T-cell (primary cell): ENCODE measurements at regions of chr11 and their contacts with region 1.

Region 1: DNA sequence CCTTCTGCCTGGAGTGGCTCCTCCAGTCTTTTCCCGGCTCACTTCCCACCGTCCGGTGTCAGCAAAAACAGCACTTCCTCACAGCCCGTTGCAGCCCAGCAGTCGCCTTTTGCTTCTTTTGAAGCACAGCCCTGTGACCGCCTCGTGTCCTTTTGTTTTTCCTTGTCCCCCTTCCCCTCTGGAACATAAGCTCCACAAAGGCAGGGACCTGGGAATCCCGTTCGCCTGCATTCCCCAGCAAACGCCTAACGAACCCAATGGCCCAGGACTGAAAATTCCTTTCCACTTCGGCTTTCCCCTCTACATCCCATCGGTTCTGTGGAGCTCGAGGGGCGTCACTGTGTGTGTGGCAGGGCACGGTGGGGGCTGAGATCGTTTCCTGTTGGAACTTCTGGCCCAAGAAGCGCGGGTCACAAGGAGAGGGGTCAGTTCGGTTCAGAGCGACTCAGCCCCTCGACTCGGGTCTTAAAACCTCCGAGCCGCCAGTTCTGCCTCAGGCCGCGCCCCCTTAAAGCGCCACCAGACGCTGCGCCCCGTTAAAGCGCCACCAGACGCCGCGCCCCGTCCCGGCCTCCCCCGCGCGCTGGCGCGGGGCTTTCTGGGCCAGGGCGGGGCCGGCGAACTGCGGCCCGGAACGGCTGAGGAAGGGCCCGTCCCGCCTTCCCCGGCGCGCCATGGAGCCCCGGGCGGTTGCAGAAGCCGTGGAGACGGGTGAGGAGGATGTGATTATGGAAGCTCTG is 843 bp downstream of the RIC8A start:
- DNase-seq: peak; percentile 67 to 89 (median 80)
- ATAC-seq: peak; percentile 65 to 72 (median 67)
- H3K4me3 ChIP-seq: peak overlapping the region; percentile 97 to 99
- H3K4me3 Mint-ChIP-seq: peak overlapping the region; percentile 85 to 99 (median 96)
- H3K27ac ChIP-seq: peak overlapping the region; percentile 99
- H3K27ac Mint-ChIP-seq: peak overlapping the region; percentile 98 to 99
- H3K4me1 ChIP-seq: peaks cover 15 to 69% of the 10 kb centered on the region in 2 experiments
- H3K4me1 Mint-ChIP-seq: peaks cover 38 to 59% (median 53%) of the 10 kb centered on the region in 3 donors
- H3K27me3 ChIP-seq: no peaks in the 10 kb centered on the region
- H3K27me3 Mint-ChIP-seq: no peaks in the 10 kb centered on the region

Region 2: DNA sequence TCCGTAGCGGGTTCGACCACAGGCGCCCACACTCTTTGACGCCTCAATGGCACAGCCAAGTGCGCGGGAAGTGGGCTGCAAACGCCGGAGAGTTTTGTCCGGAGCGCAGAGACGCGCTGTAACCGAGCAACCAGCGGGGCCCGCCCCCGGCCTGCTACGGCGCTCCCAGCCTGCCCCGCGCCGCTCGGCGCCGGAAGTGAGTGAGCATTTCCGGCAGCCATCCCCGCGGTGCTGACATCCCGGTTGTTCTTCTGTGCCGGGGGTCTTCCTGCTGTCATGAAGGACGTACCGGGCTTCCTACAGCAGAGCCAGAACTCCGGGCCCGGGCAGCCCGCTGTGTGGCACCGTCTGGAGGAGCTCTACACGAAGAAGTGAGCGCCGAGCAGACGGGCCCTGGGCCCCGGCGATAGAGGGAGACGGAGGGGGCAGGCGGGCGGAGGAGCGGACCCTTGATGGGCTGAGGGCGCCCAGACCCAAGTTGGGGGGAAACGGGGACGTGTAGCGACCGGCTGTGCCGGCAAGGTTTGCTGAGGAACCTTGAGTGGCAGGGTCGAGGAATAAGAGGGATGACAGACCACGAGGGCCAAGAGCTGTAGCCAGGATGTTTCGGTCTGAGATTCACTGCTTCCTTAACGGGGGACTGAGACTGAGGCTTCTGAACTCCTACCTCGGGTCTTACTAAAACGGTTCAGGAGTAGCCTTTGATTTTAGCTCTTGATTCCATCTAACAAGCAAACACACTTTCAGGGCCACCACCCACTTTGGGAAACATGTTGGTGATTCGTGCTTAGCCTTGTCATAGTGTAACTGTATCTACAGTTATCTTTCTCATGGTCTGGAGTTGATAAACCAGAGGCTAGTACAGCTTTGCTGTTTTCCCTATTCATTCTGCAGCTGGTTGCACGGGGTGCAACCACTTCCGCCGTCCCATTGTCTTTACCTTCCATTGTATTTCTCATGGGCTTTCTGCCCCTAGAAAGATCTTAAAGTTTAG is 28.7 kb after region 1 on chr11 and contains the start of gene PSMD13:
- CTCF ChIA-PET with region 1: interaction called in 1 of 2 experiments, 3 read pairs
- POLR2A ChIA-PET with region 1: interaction called in 1 of 2 experiments, 13 read pairs
- DNase-seq: peak; percentile 73 to 92 (median 85)
- ATAC-seq: peak; percentile 70 to 85 (median 83)
- H3K4me3 ChIP-seq: peak within 1 kb of the TSS; percentile 96 to 100
- H3K4me3 Mint-ChIP-seq: peak within 1 kb of the TSS; percentile 94 to 98 (median 96)
- H3K27ac ChIP-seq: peak within 1 kb of the TSS; percentile 99
- H3K27ac Mint-ChIP-seq: peak within 1 kb of the TSS; percentile 99 to 100
- H3K4me1 ChIP-seq: peaks cover 12 to 25% of the 10 kb centered on the region in 2 experiments
- H3K4me1 Mint-ChIP-seq: peaks cover 47 to 55% (median 53%) of the 10 kb centered on the region in 3 donors
- H3K27me3 ChIP-seq: no peaks in the 10 kb centered on the region
- H3K27me3 Mint-ChIP-seq: no peaks in the 10 kb centered on the region
- total RNA-seq, gene PSMD13: 74.0 to 115 (median 108) TPM

Region 3: DNA sequence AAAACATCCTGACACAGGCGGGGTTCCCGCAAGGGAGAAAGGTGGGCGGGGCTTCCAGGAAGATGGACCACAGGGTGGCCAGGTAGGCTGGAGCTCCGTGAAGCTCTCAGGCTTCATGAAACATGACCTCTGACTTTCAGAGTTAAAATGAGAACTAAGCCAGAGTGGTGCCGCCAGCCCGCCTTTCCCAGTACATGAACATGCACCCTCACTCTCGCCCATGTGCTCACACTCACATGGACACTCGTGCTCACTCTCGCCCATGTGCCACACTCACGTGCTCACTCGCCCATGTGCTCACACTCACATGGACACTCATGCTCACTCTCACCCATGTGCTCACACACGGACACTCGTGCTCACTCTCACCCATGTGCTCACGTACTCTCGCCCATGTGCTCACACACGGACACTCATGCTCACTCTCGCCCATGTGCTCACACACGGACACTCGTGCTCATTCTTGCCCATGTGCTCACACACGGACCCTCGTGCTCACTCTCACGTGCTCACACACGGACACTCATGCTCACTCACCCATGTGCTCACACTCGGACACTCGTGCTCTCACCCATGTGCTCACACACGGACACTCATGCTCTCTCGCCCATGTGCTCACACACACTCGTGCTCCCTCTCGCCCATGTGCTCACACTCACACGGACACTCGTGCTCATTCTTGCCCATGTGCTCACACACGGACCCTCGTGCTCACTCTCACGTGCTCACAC is 288.6 kb after region 1 on chr11:
- CTCF ChIA-PET with region 1: no interaction called
- POLR2A ChIA-PET with region 1: no interaction called
- DNase-seq: no peak
- ATAC-seq: no peak
- H3K4me3 ChIP-seq: no peak overlapping the region
- H3K4me3 Mint-ChIP-seq: no peak overlapping the region
- H3K27ac ChIP-seq: no peak overlapping the region
- H3K27ac Mint-ChIP-seq: peak overlapping the region in 1 of 2 donors; percentile 39
- H3K4me1 ChIP-seq: no peaks in the 10 kb centered on the region
- H3K4me1 Mint-ChIP-seq: peaks cover 0 to 13% (median 11%) of the 10 kb centered on the region in 3 donors
- H3K27me3 ChIP-seq: no peaks in the 10 kb centered on the region
- H3K27me3 Mint-ChIP-seq: no peaks in the 10 kb centered on the region

Region 4: GRCh38 chr11:859509-860131 is 651.3 kb after region 1 on chr11:
- CTCF ChIA-PET with region 1: no interaction called
- POLR2A ChIA-PET with region 1: no interaction called
- DNase-seq: no peak
- ATAC-seq: no peak
- H3K4me3 ChIP-seq: no peak overlapping the region
- H3K4me3 Mint-ChIP-seq: no peak overlapping the region
- H3K27ac ChIP-seq: no peak overlapping the region
- H3K27ac Mint-ChIP-seq: no peak overlapping the region
- H3K4me1 ChIP-seq: peaks cover 0 to 6% of the 10 kb centered on the region in 2 experiments
- H3K4me1 Mint-ChIP-seq: peaks cover 0 to 4% (median 0%) of the 10 kb centered on the region in 3 donors
- H3K27me3 ChIP-seq: peaks cover 0 to 10% of the 10 kb centered on the region in 2 experiments
- H3K27me3 Mint-ChIP-seq: no peaks in the 10 kb centered on the region